ENCODE measurements at regions of chr15 and their contacts with region 1.

Region 1: DNA sequence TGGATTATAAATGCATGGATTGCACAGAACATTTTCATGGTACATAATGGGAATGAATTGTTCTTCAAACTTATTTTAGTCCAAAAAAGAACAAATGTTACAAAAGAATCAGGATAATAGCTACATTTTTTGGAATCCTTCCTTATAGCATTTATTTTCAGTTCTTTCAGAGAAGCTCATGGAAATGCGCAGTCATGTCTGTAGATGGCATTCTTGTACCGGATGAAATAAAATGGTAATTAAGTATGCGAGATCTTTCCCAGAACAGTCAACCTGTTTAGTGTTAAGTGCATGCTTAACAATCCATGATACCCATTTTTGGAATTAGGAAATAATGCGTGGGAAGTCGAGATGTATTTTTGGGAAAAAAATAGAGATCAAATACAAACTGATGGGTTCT is 38.2 kb upstream of the GOLGA8B start:
- DNase-seq: no peak
- ATAC-seq: no peak
- H3K4me3 ChIP-seq: no peak overlapping the region
- H3K27ac ChIP-seq: no peak overlapping the region
- H3K4me1 ChIP-seq: no peaks in the 10 kb centered on the region
- H3K27me3 ChIP-seq: no peaks in the 10 kb centered on the region

Region 2: GRCh38 chr15:34773917-34774316 is 152.2 kb after region 1 on chr15:
- intact Hi-C with region 1: no loop called
- DNase-seq: no peak
- ATAC-seq: no peak
- H3K4me3 ChIP-seq: no peak overlapping the region
- H3K27ac ChIP-seq: no peak overlapping the region
- H3K4me1 ChIP-seq: peaks cover 2 to 3% of the 10 kb centered on the region in 2 donors
- H3K27me3 ChIP-seq: no peaks in the 10 kb centered on the region

Region 3: DNA sequence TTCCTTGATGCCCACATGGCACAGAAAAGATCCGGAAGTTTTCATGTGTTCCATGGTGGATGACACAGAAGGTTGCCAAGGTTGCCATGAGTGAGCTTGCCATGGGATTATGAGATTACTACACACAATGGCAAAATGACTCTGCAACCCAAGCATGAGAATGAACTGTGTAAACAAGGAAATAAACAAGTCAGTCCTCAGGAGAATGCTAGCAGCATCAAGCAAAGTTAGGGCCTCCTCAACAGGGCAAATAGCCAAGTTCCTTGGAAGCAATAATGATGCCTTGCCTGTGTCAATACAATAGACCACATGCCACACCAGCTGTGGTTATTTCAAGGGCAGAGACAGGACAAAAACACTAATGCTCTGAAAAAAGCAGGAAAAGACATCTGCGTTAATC is 306.1 kb after region 1 on chr15:
- intact Hi-C with region 1: loop called (anchors 5 kb)
- DNase-seq: no peak
- ATAC-seq: no peak
- H3K4me3 ChIP-seq: no peak overlapping the region
- H3K27ac ChIP-seq: no peak overlapping the region
- H3K4me1 ChIP-seq: no peaks in the 10 kb centered on the region
- H3K27me3 ChIP-seq: no peaks in the 10 kb centered on the region

Measured in aorta (tissue), 5 donors.